Activated CD4-positive, alpha-beta T cell treated with anti-CD3 and anti-CD28 coated beads, Interleukin-2, amount 10 ng/mL, durations not matched to agents 24 days and 14 days (primary cell): ENCODE measurements at regions of chr20 and their contacts with region 1.

Region 1: GRCh38 chr20:59047938-59048680 is 5.5 kb upstream of the PRELID3B start:
- DNase-seq: peak; percentile 56
- H3K4me3 Mint-ChIP-seq: no peak overlapping the region
- H3K27ac Mint-ChIP-seq: peak overlapping the region; percentile 26
- H3K4me1 Mint-ChIP-seq: peaks cover 20% of the 10 kb centered on the region
- H3K27me3 Mint-ChIP-seq: peaks cover 16% of the 10 kb centered on the region

Region 2: GRCh38 chr20:59074445-59074844 is 26.3 kb after region 1 on chr20:
- intact Hi-C with region 1: loop called (anchors 2 kb)
- DNase-seq: no peak
- H3K4me3 Mint-ChIP-seq: no peak overlapping the region
- H3K27ac Mint-ChIP-seq: no peak overlapping the region
- H3K4me1 Mint-ChIP-seq: peaks cover 24% of the 10 kb centered on the region
- H3K27me3 Mint-ChIP-seq: peaks cover 36% of the 10 kb centered on the region